ENCODE measurements at regions of chr6 and their contacts with region 1.

Region 1: DNA sequence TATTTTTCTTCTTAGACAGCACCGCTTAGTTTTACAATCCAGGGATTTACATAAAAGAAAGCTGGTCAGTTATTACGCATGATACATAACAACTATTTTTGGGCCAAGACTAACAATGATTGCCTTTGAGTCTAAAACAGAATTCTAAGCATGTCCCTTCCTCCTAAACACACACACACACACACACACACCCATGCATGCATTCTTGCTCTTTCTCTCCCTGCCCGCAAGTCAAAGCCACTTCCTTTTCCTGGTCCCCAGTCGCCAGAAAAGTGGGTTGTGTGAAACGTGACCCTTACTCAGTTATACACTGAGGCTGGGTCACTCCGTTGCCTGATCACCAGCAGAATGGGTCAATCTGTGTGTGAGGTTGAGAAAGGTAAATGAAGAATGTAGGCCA is 31.4 kb downstream of the FYN start:
- DNase-seq: peak; percentile 65 to 69 (median 66)
- H3K4me3 ChIP-seq: peak overlapping the region in 1 of 2 donors; percentile 29
- H3K4me3 Mint-ChIP-seq: no peak overlapping the region
- H3K27ac ChIP-seq: peak overlapping the region; percentile 54
- H3K27ac Mint-ChIP-seq: no peak overlapping the region
- H3K4me1 ChIP-seq: peaks cover 100% of the 10 kb centered on the region
- H3K4me1 Mint-ChIP-seq: peaks cover 0 to 60% (median 29%) of the 10 kb centered on the region in 4 donors
- H3K27me3 ChIP-seq: no peaks in the 10 kb centered on the region
- H3K27me3 Mint-ChIP-seq: no peaks in the 10 kb centered on the region

Region 2: DNA sequence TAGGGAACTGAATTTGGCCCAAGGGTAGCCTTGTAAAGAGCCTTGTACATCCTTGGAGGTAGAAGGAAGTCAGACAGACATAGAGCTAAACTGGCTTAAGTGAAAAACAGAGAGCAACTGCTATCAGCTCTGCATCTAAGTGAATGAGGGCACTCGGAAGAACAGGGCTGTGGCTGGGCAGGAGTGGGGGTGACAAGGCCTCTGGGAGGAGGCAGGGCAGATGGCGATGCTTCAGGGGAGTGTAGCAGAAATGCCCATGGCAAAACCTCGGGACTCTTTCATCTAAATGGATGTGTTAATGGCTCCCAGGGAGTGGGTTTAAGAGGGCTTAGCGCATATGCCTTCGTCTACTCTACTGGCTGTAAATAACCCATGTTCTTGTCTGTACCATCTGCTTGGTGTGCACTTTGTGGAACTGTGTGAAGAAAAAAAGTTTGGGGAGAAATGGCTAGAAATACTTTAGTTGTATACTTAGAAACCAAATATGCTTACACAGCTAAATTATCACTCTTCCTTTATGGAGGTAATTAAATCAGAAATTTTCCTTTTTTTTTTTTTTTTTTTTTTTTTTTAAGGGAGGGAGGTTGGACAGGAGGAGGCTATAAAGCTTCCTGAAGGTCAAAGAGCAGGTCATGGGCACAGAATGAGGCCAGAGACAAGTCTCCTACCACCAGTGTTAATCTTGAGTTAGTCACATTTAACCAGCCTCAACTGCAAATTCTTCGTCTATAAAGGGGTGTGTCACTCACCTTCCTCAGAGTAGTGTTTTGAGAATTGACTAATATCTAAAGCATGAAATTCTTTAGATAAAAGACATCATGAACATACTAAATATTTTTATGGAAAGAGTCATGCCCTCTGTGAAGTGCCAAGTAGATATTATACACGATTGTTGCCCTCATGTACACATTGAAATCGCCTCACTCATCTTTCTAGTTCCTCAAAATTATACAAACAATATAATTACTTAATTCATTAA is 29.5 kb before region 1 on chr6:
- CTCF ChIA-PET with region 1: interaction called, 4 read pairs
- POLR2A ChIA-PET with region 1: interaction called, 13 read pairs
- intact Hi-C with region 1: no loop called
- DNase-seq: peak in 1 of 5 donors; percentile 33
- H3K4me3 ChIP-seq: no peak overlapping the region
- H3K4me3 Mint-ChIP-seq: peak overlapping the region in 7 of 8 donors; percentile 47 to 86 (median 68)
- H3K27ac ChIP-seq: peak overlapping the region; percentile 28
- H3K27ac Mint-ChIP-seq: peak overlapping the region; percentile 83 to 95 (median 94)
- H3K4me1 ChIP-seq: peaks cover 97% of the 10 kb centered on the region
- H3K4me1 Mint-ChIP-seq: peaks cover 61 to 79% (median 74%) of the 10 kb centered on the region in 4 donors
- H3K27me3 ChIP-seq: no peaks in the 10 kb centered on the region
- H3K27me3 Mint-ChIP-seq: no peaks in the 10 kb centered on the region

Region 3: DNA sequence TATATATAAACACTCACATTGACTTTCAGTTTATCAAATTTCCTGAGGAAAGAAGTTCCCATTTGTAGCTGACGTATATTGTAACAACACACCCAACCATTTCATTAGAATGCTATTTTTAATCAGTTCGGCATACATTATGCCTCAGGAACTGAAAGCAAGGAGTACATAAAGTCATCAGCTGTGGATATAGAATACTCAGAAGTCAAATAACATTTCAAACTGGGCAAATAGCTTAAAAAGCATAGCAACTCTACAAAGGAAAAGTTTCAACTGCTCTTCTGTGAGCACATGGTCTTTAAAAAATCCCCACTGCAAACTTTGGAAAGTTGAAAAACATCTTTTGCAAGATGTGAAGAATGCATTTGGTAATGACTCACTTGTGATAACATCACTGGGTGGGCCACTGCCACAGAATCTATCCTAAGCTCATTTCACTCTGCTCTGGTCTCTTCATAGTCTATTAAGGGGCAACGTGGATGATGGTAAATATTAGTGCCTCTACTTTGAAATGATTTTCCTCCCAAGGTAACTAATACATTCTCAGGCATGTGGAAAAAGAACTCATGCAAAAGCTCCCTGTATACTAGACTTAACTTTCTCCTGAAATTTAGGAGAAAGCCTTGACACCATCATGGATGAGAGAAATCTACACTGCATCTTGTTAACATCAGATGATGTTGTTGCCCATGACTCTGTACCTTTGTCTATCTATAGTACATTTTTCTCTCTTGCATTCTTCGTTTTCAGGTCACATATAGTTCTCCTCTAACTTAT is 17.8 kb before region 1 on chr6:
- CTCF ChIA-PET with region 1: interaction called, 15 read pairs
- POLR2A ChIA-PET with region 1: interaction called, 47 read pairs
- intact Hi-C with region 1: loop called (anchors 1 kb)
- DNase-seq: peak in 1 of 5 donors; percentile 73
- H3K4me3 ChIP-seq: no peak overlapping the region
- H3K4me3 Mint-ChIP-seq: peak overlapping the region; percentile 4 to 75 (median 58)
- H3K27ac ChIP-seq: peak overlapping the region; percentile 49
- H3K27ac Mint-ChIP-seq: peak overlapping the region; percentile 67 to 95 (median 87)
- H3K4me1 ChIP-seq: peaks cover 76% of the 10 kb centered on the region
- H3K4me1 Mint-ChIP-seq: peaks cover 64 to 82% (median 70%) of the 10 kb centered on the region in 4 donors
- H3K27me3 ChIP-seq: no peaks in the 10 kb centered on the region
- H3K27me3 Mint-ChIP-seq: no peaks in the 10 kb centered on the region

Region 4: GRCh38 chr6:111864138-111865048 is 22.6 kb after region 1 on chr6:
- CTCF ChIA-PET with region 1: interaction called, 9 read pairs
- POLR2A ChIA-PET with region 1: interaction called, 64 read pairs
- intact Hi-C with region 1: no loop called
- DNase-seq: no peak
- H3K4me3 ChIP-seq: no peak overlapping the region
- H3K4me3 Mint-ChIP-seq: peak overlapping the region in 7 of 8 donors; percentile 8 to 80 (median 71)
- H3K27ac ChIP-seq: no peak overlapping the region
- H3K27ac Mint-ChIP-seq: peak overlapping the region; percentile 7 to 88 (median 74)
- H3K4me1 ChIP-seq: peaks cover 100% of the 10 kb centered on the region
- H3K4me1 Mint-ChIP-seq: peaks cover 85 to 100% (median 93%) of the 10 kb centered on the region in 4 donors
- H3K27me3 ChIP-seq: no peaks in the 10 kb centered on the region
- H3K27me3 Mint-ChIP-seq: no peaks in the 10 kb centered on the region